ENCODE measurements at regions of chr4 and their contacts with region 1.

Region 1: GRCh38 chr4:74675673-74676279 is 118.5 kb downstream of the BTC start:
- DNase-seq: no peak
- H3K4me3 ChIP-seq: no peak overlapping the region
- H3K27ac ChIP-seq: no peak overlapping the region
- H3K4me1 ChIP-seq: no peaks in the 10 kb centered on the region
- H3K27me3 ChIP-seq: peaks cover 5% of the 10 kb centered on the region
- CTCF ChIP-seq: peak; percentile 77

Region 2: GRCh38 chr4:74370912-74371311 is 304.9 kb before region 1 on chr4:
- intact Hi-C with region 1: loop called (anchors 5 kb)
- DNase-seq: no peak
- H3K4me3 ChIP-seq: no peak overlapping the region
- H3K27ac ChIP-seq: no peak overlapping the region
- H3K4me1 ChIP-seq: peaks cover under 1% of the 10 kb centered on the region
- H3K27me3 ChIP-seq: peaks cover 39% of the 10 kb centered on the region
- CTCF ChIP-seq: peak; percentile 68

Region 3: GRCh38 chr4:74397748-74398426 is 277.9 kb before region 1 on chr4:
- intact Hi-C with region 1: no loop called
- DNase-seq: no peak
- H3K4me3 ChIP-seq: peak overlapping the region; percentile 23
- H3K27ac ChIP-seq: no peak overlapping the region
- H3K4me1 ChIP-seq: no peaks in the 10 kb centered on the region
- H3K27me3 ChIP-seq: no peaks in the 10 kb centered on the region
- CTCF ChIP-seq: no peak